GM12878 (cell line): ENCODE measurements at regions of chr1 and their contacts with region 1.

Region 1: GRCh38 chr1:11838349-11839272 is 9.0 kb downstream of the NPPA start:
- DNase-seq: peak; percentile 2
- ATAC-seq: peak; percentile 97
- H3K4me3 ChIP-seq: no peak overlapping the region
- H3K27ac ChIP-seq: no peak overlapping the region
- H3K4me1 ChIP-seq: peaks cover 17% of the 10 kb centered on the region
- H3K27me3 ChIP-seq: no peaks in the 10 kb centered on the region
- CTCF ChIP-seq: peak; percentile 97 to 99 (median 99)
- EP300 ChIP-seq: no peak
- POLR2A ChIP-seq: peak; percentile 22; the same call in 1 of the 2 replicates
- RAD21 ChIP-seq: peak; percentile 94

Region 2: GRCh38 chr1:11893907-11894251 is 55.3 kb after region 1 on chr1:
- CTCF ChIA-PET with region 1: interaction called, 23 read pairs
- POLR2A ChIA-PET with region 1: no interaction called
- RAD21 ChIA-PET with region 1: no interaction called
- SMC1A ChIA-PET with region 1: interaction called, 3 read pairs
- in situ Hi-C with region 1: loop called (anchors 5 kb)
- intact Hi-C with region 1: loop called (anchors 1 kb)
- DNase-seq: no peak
- ATAC-seq: peak; percentile 98
- H3K4me3 ChIP-seq: no peak overlapping the region
- H3K27ac ChIP-seq: no peak overlapping the region
- H3K4me1 ChIP-seq: no peaks in the 10 kb centered on the region
- H3K27me3 ChIP-seq: peaks cover 0 to 2% of the 10 kb centered on the region in 2 experiments; a peak in 2 of 4 replicates
- CTCF ChIP-seq: peak; percentile 95 to 99 (median 98)
- EP300 ChIP-seq: no peak
- POLR2A ChIP-seq: no peak
- RAD21 ChIP-seq: peak; percentile 91

Region 3: DNA sequence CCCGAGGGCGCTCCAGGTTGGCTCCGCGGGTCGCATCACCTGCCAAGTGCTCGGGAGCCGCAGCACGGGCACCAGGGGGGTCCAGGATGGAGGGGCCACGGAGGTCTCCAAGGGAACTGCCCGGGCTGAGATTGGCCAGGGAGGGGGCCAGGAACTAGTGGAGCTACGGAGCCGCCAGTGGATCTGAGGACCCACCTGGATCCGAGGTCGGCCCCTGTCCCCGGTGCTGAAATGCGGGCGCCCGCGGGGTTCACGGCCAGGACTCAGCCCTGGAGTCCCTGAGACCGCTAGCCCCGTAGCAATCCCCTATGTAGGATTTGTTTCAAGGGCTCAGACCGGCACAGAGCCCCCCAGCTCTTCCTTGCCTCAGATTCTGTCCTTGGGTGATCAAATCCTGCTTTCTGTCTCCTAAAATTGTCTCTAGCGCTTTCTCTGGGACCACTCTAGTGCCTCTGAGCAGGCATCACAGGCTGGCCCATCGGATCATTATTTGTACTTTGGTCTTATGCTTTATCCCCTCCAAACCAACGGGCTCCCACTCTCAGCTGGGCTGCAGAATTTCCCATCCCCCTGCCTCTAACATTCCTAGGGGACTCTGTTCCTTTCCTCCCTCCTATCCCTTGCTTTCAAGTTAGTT is 60.3 kb after region 1 on chr1:
- CTCF ChIA-PET with region 1: interaction called, 10 read pairs
- POLR2A ChIA-PET with region 1: no interaction called
- RAD21 ChIA-PET with region 1: no interaction called
- SMC1A ChIA-PET with region 1: interaction called, 3 read pairs
- in situ Hi-C with region 1: loop called (anchors 5 kb)
- intact Hi-C with region 1: loop called (anchors 1 kb)
- DNase-seq: no peak
- ATAC-seq: no peak
- H3K4me3 ChIP-seq: no peak overlapping the region
- H3K27ac ChIP-seq: no peak overlapping the region
- H3K4me1 ChIP-seq: no peaks in the 10 kb centered on the region
- H3K27me3 ChIP-seq: peaks cover 0 to 2% of the 10 kb centered on the region in 2 experiments; a peak in 2 of 4 replicates
- CTCF ChIP-seq: no peak
- EP300 ChIP-seq: no peak
- POLR2A ChIP-seq: no peak
- RAD21 ChIP-seq: no peak

Region 4: DNA sequence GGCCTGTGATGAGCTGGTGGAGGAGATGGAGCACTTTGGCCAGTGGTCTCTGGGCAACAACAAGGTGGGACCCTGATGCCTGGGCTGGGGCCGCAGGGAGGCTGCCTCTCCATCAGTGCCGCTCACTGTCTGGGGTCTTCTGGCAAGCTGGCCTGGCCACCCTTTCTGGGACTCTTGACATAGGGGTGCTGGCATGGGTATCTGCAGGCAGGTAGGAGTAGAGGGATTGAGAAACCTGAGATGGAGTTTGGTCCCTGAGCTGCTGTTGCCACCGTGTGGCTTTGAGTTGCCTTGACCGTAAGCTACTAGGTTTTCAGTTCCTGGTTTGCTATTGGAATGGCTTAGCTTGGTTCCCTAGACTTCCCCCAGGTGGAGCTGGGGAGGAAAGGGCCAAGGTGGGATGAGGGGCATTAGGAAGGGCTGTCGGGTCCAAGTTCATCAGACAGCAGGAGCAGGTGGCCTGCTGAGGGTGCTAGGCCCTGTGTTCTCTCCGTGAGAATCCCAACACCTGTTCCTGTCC is 128.5 kb after region 1 on chr1:
- CTCF ChIA-PET with region 1: interaction called, 24 read pairs
- POLR2A ChIA-PET with region 1: no interaction called
- RAD21 ChIA-PET with region 1: interaction called, 10 read pairs
- SMC1A ChIA-PET with region 1: interaction called, 5 read pairs
- in situ Hi-C with region 1: loop called (anchors 10 kb)
- intact Hi-C with region 1: loop called (anchors 2 kb)
- DNase-seq: peak; percentile 41
- ATAC-seq: peak; percentile 92
- H3K4me3 ChIP-seq: no peak overlapping the region
- H3K27ac ChIP-seq: no peak overlapping the region
- H3K4me1 ChIP-seq: no peaks in the 10 kb centered on the region
- H3K27me3 ChIP-seq: no peaks in the 10 kb centered on the region
- CTCF ChIP-seq: peak; percentile 63 to 81 (median 70); a peak in 5 of 6 replicates
- EP300 ChIP-seq: no peak
- POLR2A ChIP-seq: no peak
- RAD21 ChIP-seq: peak; percentile 77